ENCODE measurements at regions of chr20 and their contacts with region 1.

Region 1: GRCh38 chr20:36773597-36774390 is at the start of gene DSN1:
- DNase-seq: peak; percentile 83
- H3K4me3 ChIP-seq: peak within 1 kb of the TSS; percentile 80
- H3K27me3 ChIP-seq: no peaks in the 10 kb centered on the region
- CTCF ChIP-seq: no peak
- polyA plus RNA-seq, gene DSN1: 7.3 and 11.0 TPM in 2 replicates

Region 2: GRCh38 chr20:36784900-36785299 is 11.1 kb after region 1 on chr20:
- CTCF ChIA-PET with region 1: interaction called, 16 read pairs
- POLR2A ChIA-PET with region 1: no interaction called
- DNase-seq: no peak
- H3K4me3 ChIP-seq: no peak overlapping the region
- H3K27me3 ChIP-seq: no peaks in the 10 kb centered on the region
- CTCF ChIP-seq: no peak

Region 3: GRCh38 chr20:36861875-36862801 is 88.3 kb after region 1 on chr20:
- CTCF ChIA-PET with region 1: interaction called, 13 read pairs
- POLR2A ChIA-PET with region 1: no interaction called
- DNase-seq: peak; percentile 45
- H3K4me3 ChIP-seq: peak overlapping the region; percentile 61
- H3K27me3 ChIP-seq: no peaks in the 10 kb centered on the region
- CTCF ChIP-seq: no peak

Region 4: GRCh38 chr20:37108676-37109075 is 334.9 kb after region 1 on chr20:
- CTCF ChIA-PET with region 1: no interaction called
- POLR2A ChIA-PET with region 1: no interaction called
- DNase-seq: no peak
- H3K4me3 ChIP-seq: no peak overlapping the region
- H3K27me3 ChIP-seq: no peaks in the 10 kb centered on the region
- CTCF ChIP-seq: no peak